GM12878 (cell line): ENCODE measurements at regions of chr5 and their contacts with region 1.

Region 1: GRCh38 chr5:132714456-132715307 is 22.7 kb downstream of the KIF3A start:
- DNase-seq: no peak
- ATAC-seq: peak; percentile 64
- H3K4me3 ChIP-seq: no peak overlapping the region
- H3K27ac ChIP-seq: no peak overlapping the region
- H3K4me1 ChIP-seq: no peaks in the 10 kb centered on the region
- H3K27me3 ChIP-seq: no peaks in the 10 kb centered on the region
- CTCF ChIP-seq: peak in 1 of 3 experiments; percentile 28; a peak in 2 of 6 replicates
- EP300 ChIP-seq: no peak
- POLR2A ChIP-seq: no peak
- RAD21 ChIP-seq: 0 out of 2 replicates have a peak, but pooled peaks have one; percentile 8

Region 2: DNA sequence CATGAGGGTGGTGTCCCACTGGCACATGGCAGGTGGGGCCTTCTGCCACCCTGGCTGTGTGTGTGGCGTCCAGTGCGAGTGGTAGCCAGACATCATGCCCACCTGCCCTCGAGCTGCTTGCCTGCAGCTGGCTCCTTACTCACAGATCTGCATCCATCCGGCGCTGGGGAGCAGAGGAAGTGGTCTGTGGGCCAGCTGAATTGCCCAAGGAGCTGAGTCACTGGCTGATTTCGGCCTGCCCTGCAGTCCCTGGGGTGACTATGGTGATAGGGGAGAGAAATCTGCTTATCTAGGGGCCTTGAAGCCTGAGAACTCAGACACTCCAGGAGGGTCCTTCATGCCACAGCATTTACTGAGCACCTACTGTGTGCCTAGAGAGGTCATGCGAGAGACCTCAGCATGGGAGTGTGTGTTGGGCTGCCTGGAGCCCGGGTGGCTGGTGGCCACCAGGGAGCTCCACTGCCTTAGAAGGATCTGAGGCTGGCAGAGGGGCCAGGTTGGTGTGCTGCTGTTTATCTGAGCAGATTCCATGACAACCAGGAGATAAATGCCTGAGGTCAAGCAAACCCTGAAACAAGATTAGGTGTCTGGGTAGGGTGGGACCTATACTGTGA is 288.1 kb before region 1 on chr5:
- CTCF ChIA-PET with region 1: no interaction called
- POLR2A ChIA-PET with region 1: no interaction called
- RAD21 ChIA-PET with region 1: no interaction called
- SMC1A ChIA-PET with region 1: no interaction called
- in situ Hi-C with region 1: no loop called
- intact Hi-C with region 1: no loop called
- DNase-seq: no peak
- ATAC-seq: peak; percentile 62
- H3K4me3 ChIP-seq: peak overlapping the region; percentile 49
- H3K27ac ChIP-seq: peak overlapping the region; percentile 94
- H3K4me1 ChIP-seq: peaks cover 90% of the 10 kb centered on the region
- H3K27me3 ChIP-seq: no peaks in the 10 kb centered on the region
- CTCF ChIP-seq: peak; percentile 47 to 56 (median 52)
- EP300 ChIP-seq: peak; percentile 17 to 67; a peak in 3 of 4 replicates
- POLR2A ChIP-seq: peak; percentile 88
- RAD21 ChIP-seq: peak; percentile 42; the same call in 1 of the 2 replicates

Region 3: DNA sequence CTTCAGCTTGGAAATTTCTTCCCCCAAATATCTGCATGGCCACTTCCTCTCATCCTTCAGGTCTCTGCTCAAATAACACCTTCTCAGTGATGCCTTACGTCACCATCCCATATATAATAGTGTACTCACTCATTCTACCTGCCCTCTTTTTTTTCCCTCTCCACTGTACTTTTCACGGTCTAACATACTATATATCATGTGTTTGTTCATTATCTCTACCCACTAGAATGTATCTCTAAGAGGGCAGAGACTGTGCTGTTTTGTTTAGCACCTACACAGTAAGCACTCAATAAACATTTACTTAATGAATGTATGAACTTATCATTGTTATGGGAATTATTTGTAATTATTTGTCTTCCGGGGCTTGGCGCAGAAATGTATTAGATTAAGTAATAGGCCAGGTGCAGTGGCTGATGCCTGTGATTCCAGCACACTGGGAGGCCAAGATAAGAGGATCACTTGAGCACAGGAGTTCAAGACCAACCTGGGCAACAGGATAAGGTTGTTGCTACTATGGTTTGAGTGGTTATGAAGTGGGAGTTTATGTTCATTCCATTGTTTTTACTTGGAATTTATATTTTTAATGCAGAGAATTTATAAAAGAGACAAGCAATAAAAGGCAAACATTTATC is 62.7 kb before region 1 on chr5:
- CTCF ChIA-PET with region 1: no interaction called
- POLR2A ChIA-PET with region 1: no interaction called
- RAD21 ChIA-PET with region 1: no interaction called
- SMC1A ChIA-PET with region 1: no interaction called
- in situ Hi-C with region 1: no loop called
- intact Hi-C with region 1: no loop called
- DNase-seq: no peak
- ATAC-seq: no peak
- H3K4me3 ChIP-seq: no peak overlapping the region
- H3K27ac ChIP-seq: no peak overlapping the region
- H3K4me1 ChIP-seq: peaks cover 12% of the 10 kb centered on the region
- H3K27me3 ChIP-seq: no peaks in the 10 kb centered on the region
- CTCF ChIP-seq: no peak
- EP300 ChIP-seq: no peak
- POLR2A ChIP-seq: no peak
- RAD21 ChIP-seq: no peak

Region 4: DNA sequence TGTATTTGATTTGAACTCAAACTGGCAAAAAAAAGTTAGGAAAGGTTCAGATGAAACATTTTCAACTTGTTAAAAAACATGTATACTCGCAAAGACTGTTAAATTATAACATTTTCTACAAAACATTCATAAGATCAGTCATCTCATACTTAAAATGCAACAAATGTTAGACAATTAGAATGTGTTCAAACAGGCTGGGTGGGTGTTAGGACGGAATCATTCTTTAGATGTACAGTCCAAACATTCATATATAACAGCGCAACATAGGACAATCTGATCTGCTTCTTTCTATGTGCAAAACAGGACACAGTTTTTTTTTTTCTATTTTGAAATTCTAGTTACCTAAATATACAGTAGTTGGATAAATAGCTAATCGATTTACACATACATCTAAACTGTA is 18.7 kb before region 1 on chr5:
- CTCF ChIA-PET with region 1: interaction called, 12 read pairs
- POLR2A ChIA-PET with region 1: no interaction called
- RAD21 ChIA-PET with region 1: no interaction called
- SMC1A ChIA-PET with region 1: interaction called, 9 read pairs
- in situ Hi-C with region 1: no loop called
- intact Hi-C with region 1: no loop called
- DNase-seq: no peak
- ATAC-seq: no peak
- H3K4me3 ChIP-seq: no peak overlapping the region
- H3K27ac ChIP-seq: no peak overlapping the region
- H3K4me1 ChIP-seq: peaks cover 5% of the 10 kb centered on the region; the same call in 1 of the 2 replicates
- H3K27me3 ChIP-seq: no peaks in the 10 kb centered on the region
- CTCF ChIP-seq: no peak
- EP300 ChIP-seq: no peak
- POLR2A ChIP-seq: no peak
- RAD21 ChIP-seq: no peak

Region 5: GRCh38 chr5:132729896-132730295 is 15.2 kb after region 1 on chr5:
- CTCF ChIA-PET with region 1: interaction called, 16 read pairs
- POLR2A ChIA-PET with region 1: interaction called, 11 read pairs
- RAD21 ChIA-PET with region 1: interaction called, 7 read pairs
- SMC1A ChIA-PET with region 1: interaction called, 31 read pairs
- in situ Hi-C with region 1: no loop called
- intact Hi-C with region 1: no loop called
- DNase-seq: no peak
- ATAC-seq: no peak
- H3K4me3 ChIP-seq: no peak overlapping the region
- H3K27ac ChIP-seq: no peak overlapping the region
- H3K4me1 ChIP-seq: no peaks in the 10 kb centered on the region
- H3K27me3 ChIP-seq: no peaks in the 10 kb centered on the region
- CTCF ChIP-seq: no peak
- EP300 ChIP-seq: no peak
- POLR2A ChIP-seq: no peak
- RAD21 ChIP-seq: no peak

Region 6: GRCh38 chr5:132736853-132737833 is 22.5 kb after region 1 on chr5 and contains the start of gene KIF3A:
- CTCF ChIA-PET with region 1: interaction called, 16 read pairs
- POLR2A ChIA-PET with region 1: interaction called, 4 read pairs
- RAD21 ChIA-PET with region 1: interaction called, 4 read pairs
- SMC1A ChIA-PET with region 1: interaction called, 13 read pairs
- in situ Hi-C with region 1: no loop called
- intact Hi-C with region 1: no loop called
- DNase-seq: peak; percentile 94
- ATAC-seq: peak; percentile 91
- H3K4me3 ChIP-seq: peak within 1 kb of the TSS; percentile 80
- H3K27ac ChIP-seq: peak within 1 kb of the TSS; percentile 52
- H3K4me1 ChIP-seq: no peaks in the 10 kb centered on the region
- H3K27me3 ChIP-seq: no peaks in the 10 kb centered on the region
- CTCF ChIP-seq: no peak
- EP300 ChIP-seq: no peak
- POLR2A ChIP-seq: peak; percentile 89
- RAD21 ChIP-seq: no peak
- polyA plus RNA-seq, gene KIF3A: 2.7 to 3.0 TPM

Region 7: DNA sequence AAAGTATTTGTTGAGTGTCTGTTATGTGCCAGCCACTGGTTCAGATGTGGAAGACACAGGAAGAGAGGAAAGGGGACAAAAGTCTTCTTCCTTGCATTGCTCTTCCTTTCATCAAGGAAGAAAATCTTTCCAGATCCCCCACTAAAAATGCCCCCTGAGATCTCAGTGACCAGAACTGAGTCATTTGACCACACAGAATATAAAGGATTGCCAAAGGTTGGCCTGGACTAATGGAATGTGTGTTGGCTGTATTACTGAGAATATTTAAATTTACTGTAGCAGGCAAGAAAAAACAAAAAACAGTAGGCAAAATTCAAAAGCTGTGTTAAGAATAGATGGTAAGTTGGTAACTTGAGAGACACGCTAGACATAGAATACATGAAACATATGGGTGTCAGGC is 72.4 kb after region 1 on chr5:
- CTCF ChIA-PET with region 1: no interaction called
- POLR2A ChIA-PET with region 1: interaction called, 12 read pairs
- RAD21 ChIA-PET with region 1: no interaction called
- SMC1A ChIA-PET with region 1: no interaction called
- in situ Hi-C with region 1: no loop called
- intact Hi-C with region 1: no loop called
- DNase-seq: no peak
- ATAC-seq: no peak
- H3K4me3 ChIP-seq: no peak overlapping the region
- H3K27ac ChIP-seq: no peak overlapping the region
- H3K4me1 ChIP-seq: 0 out of 2 replicates have a peak, but pooled peaks cover 3% of the 10 kb centered on the region
- H3K27me3 ChIP-seq: no peaks in the 10 kb centered on the region
- CTCF ChIP-seq: no peak
- EP300 ChIP-seq: no peak
- POLR2A ChIP-seq: no peak
- RAD21 ChIP-seq: no peak